ENCODE measurements at regions of chr1 and their contacts with region 1.

Region 1: DNA sequence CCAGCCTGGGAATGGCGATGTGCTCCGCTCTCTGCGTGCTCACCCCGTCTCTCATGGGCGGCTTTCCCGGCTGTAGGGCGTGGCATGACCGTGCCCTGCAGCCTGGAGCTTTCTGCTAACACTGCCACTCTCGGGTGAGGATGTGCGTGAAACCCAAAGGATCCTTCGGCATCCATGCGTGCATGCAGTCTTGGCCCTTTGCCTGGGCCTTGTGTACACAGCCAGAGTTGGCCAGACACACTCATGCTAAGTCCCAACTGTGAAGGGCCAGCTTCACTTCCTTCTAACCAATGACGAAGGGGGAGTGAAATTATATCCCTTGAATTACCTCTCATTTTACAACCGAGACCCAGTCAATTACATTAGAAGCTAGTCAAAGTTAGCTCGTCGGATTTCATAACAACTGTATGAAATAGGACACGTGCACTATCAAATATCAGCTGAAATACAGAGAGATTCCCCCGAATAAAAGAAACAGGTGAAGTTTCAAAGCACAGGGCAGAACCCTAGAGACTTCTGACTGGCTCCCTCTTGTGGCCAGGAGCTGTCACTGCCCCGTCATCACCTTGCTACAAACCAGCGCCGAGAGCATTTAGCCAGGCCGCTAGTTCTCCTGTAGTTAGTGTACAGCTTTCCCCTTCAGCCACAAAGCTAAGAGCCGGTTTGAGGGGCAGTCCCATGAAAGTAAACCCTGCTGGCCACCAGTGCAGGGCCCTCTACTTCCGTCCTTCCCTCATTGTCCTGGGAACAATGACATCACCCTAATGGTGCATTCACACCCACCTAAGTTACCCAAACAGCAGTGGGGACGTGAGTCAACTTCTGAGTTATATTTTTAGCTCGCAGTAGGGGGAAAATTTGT is 63.4 kb upstream of the COA6 start:
- DNase-seq: peak; percentile 87
- H3K4me3 Mint-ChIP-seq: no peak overlapping the region
- H3K27ac Mint-ChIP-seq: no peak overlapping the region
- H3K4me1 Mint-ChIP-seq: peaks cover 6% of the 10 kb centered on the region
- H3K27me3 Mint-ChIP-seq: peaks cover 2% of the 10 kb centered on the region

Region 2: GRCh38 chr1:234125283-234125682 is 184.5 kb before region 1 on chr1:
- CTCF ChIA-PET with region 1: interaction called, 62 read pairs
- intact Hi-C with region 1: no loop called
- DNase-seq: peak; percentile 57
- H3K4me3 Mint-ChIP-seq: no peak overlapping the region
- H3K27ac Mint-ChIP-seq: no peak overlapping the region
- H3K4me1 Mint-ChIP-seq: no peaks in the 10 kb centered on the region
- H3K27me3 Mint-ChIP-seq: peaks cover 29% of the 10 kb centered on the region

Region 3: DNA sequence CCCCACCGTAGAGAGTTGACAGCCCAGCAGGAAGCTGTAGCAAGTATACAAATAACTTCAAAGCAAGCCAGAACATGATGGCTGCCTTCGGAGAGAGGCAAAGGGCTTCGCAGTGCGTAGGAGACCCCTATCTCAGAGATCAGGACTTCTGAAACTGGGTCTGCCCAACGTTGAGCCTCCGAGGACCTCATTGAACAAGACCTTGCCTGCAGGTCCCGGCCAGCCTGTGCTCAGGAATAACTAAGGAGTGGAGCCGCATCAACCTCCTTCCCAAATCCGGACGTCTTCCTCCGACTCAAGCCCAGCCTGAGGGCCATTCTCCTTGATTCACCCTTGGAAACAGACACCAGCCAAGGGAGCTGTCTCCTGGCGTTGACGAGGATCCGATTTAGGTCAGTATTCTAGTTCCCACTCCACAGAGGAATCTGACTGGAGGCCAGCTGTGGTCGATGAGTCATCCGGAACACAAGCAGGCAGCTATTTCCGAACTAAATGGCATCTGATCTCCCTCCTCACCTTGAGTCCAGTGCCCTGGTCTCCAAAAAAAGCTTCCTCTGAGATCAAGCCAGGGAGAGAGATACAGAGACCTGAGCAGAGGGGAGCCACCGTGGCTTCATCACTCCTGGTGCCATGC is 103.1 kb before region 1 on chr1:
- CTCF ChIA-PET with region 1: interaction called, 155 read pairs
- intact Hi-C with region 1: no loop called
- DNase-seq: no peak
- H3K4me3 Mint-ChIP-seq: no peak overlapping the region
- H3K27ac Mint-ChIP-seq: no peak overlapping the region
- H3K4me1 Mint-ChIP-seq: no peaks in the 10 kb centered on the region
- H3K27me3 Mint-ChIP-seq: peaks cover 12% of the 10 kb centered on the region

Region 4: DNA sequence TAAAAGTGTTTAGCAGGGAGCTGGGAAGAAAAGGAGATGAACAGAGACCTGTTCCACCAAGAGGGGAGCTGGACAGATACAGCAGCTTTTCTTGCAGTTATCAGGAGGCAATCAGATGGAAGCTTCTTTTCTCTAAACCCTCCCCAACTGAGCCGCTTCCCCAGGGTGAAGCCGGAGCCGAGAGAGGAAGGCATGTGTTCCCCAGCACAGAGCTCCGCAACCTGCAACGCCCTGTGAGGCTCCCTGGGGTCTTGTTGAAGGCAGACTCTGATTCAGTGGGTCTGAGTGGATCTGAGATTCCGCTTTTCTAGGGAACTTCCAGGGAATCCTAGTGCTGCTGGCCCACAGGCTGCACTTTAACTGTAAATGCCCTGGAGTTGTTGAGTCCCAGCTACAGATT is 75.6 kb before region 1 on chr1:
- CTCF ChIA-PET with region 1: interaction called, 11 read pairs
- intact Hi-C with region 1: no loop called
- DNase-seq: no peak
- H3K4me3 Mint-ChIP-seq: no peak overlapping the region
- H3K27ac Mint-ChIP-seq: no peak overlapping the region
- H3K4me1 Mint-ChIP-seq: peaks cover 13% of the 10 kb centered on the region
- H3K27me3 Mint-ChIP-seq: peaks cover 26% of the 10 kb centered on the region

Region 5: DNA sequence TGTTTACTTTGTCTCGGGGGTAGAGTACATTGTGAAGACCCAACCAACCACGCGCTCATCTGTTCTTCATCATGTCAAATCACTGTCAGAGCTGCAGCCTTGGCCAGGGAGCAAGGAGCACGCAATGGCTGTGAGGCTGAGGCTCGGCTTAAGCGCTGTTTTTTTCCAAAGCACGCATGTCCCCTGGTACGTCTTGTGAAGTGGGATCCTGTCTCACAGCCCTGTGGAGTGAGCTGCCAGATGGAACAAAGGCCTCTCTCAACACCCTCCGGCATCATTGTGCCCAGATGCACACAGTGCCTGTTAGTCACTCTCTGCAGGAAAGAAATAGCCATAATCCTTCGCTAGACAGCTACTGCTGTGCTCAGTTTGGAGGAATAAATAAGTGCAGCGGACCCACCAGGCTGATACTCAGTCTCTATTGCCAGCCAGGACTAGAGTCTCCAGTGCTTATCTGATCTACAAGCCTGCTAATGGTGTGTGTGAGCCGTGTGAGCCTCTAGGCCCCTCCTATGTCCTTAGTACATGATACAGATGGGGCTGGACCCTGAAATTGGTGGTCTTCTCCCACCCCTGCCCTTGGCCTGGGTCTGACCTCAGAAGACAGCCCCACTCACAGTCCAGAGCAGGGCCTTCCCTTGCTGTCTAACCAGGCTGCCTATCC is 27.9 kb before region 1 on chr1:
- CTCF ChIA-PET with region 1: interaction called, 17 read pairs
- intact Hi-C with region 1: no loop called
- DNase-seq: no peak
- H3K4me3 Mint-ChIP-seq: no peak overlapping the region
- H3K27ac Mint-ChIP-seq: no peak overlapping the region
- H3K4me1 Mint-ChIP-seq: no peaks in the 10 kb centered on the region
- H3K27me3 Mint-ChIP-seq: peaks cover 4% of the 10 kb centered on the region